ENCODE measurements at regions of chr10 and their contacts with region 1.

Region 1: GRCh38 chr10:3426190-3426701 is 253.7 kb upstream of the PITRM1 start:
- DNase-seq: peak in 1 of 3 donors; percentile 79
- ATAC-seq: peak; percentile 82
- H3K4me3 ChIP-seq: no peak overlapping the region
- H3K4me1 ChIP-seq: peaks cover 34% of the 10 kb centered on the region
- CTCF ChIP-seq: no peak

Region 2: GRCh38 chr10:3208481-3209406 is 217.5 kb before region 1 on chr10:
- intact Hi-C with region 1: no loop called
- DNase-seq: no peak
- ATAC-seq: no peak
- H3K4me3 ChIP-seq: no peak overlapping the region
- H3K4me1 ChIP-seq: no peaks in the 10 kb centered on the region
- CTCF ChIP-seq: no peak

Region 3: GRCh38 chr10:3467052-3467951 is 41.1 kb after region 1 on chr10:
- intact Hi-C with region 1: loop called in 1 of 2 experiments (anchors 2 kb)
- DNase-seq: peak; percentile 67 to 82 (median 73)
- ATAC-seq: peak; percentile 45
- H3K4me3 ChIP-seq: no peak overlapping the region
- H3K4me1 ChIP-seq: peaks cover 10% of the 10 kb centered on the region
- CTCF ChIP-seq: peak; percentile 9

Region 4: GRCh38 chr10:3472287-3473051 is 46.2 kb after region 1 on chr10:
- intact Hi-C with region 1: loop called in 1 of 2 experiments (anchors 2 kb)
- DNase-seq: peak in 1 of 3 donors; percentile 59
- ATAC-seq: peak; percentile 76
- H3K4me3 ChIP-seq: no peak overlapping the region
- H3K4me1 ChIP-seq: peaks cover 10% of the 10 kb centered on the region
- CTCF ChIP-seq: no peak